CD4-positive, alpha-beta memory T cell (primary cell): ENCODE measurements at regions of chr16 and their contacts with region 1.

Region 1: GRCh38 chr16:84738255-84739038 is 38.6 kb downstream of the USP10 start:
- DNase-seq: peak; percentile 75 to 82 (median 78)
- H3K4me3 ChIP-seq: no peak overlapping the region
- H3K4me3 Mint-ChIP-seq: peak overlapping the region; percentile 27 to 80 (median 64)
- H3K27ac ChIP-seq: no peak overlapping the region
- H3K27ac Mint-ChIP-seq: peak overlapping the region; percentile 2 to 87 (median 80)
- H3K4me1 ChIP-seq: peaks cover 33% of the 10 kb centered on the region
- H3K4me1 Mint-ChIP-seq: peaks cover 36 to 53% (median 43%) of the 10 kb centered on the region in 4 donors
- H3K27me3 ChIP-seq: no peaks in the 10 kb centered on the region
- H3K27me3 Mint-ChIP-seq: no peaks in the 10 kb centered on the region

Region 2: DNA sequence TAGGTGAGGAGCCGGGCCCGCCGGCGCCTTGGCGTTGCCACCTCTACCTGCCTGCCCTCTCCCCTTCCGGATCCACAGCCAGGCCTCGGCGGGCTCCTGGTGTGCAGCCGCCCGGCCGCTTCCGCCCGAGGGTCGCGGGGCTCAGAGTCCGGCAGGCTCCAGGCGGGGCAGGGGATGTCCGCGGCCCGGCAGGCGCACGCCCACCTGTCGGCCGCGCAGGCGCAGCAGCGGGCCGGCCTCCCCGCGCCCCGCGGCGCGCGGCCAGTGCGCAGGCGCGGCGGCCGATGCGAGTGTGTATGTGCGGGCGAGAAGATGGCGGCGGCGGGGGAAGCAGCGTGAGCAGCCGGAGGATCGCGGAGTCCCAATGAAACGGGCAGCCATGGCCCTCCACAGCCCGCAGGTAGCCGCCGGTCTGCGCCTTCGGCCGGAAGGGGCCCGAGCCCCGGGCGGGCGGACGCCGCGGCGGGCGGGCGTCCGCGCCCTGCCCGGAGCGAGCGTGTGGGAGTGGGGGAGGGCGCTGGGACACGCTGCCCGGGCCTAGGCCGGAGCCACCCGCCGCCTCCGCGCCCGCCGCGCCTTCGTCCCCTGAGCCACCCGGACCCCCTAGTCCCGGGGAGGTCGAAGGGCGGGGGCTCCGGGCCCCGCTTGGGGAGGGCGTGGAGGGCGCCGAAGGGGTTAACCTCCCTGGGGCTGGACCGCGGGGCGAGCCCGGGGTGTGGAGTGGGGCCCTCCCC is 38.6 kb before region 1 on chr16 and contains the start of gene USP10:
- CTCF ChIA-PET with region 1: interaction called, 17 read pairs
- POLR2A ChIA-PET with region 1: interaction called, 3 read pairs
- intact Hi-C with region 1: loop called (anchors 5 kb)
- DNase-seq: peak; percentile 83 to 91 (median 88)
- H3K4me3 ChIP-seq: peak within 1 kb of the TSS; percentile 78 to 86
- H3K4me3 Mint-ChIP-seq: peak within 1 kb of the TSS; percentile 95 to 100 (median 98)
- H3K27ac ChIP-seq: peak within 1 kb of the TSS; percentile 92
- H3K27ac Mint-ChIP-seq: peak within 1 kb of the TSS; percentile 93 to 99 (median 98)
- H3K4me1 ChIP-seq: peaks cover 47% of the 10 kb centered on the region
- H3K4me1 Mint-ChIP-seq: peaks cover 23 to 46% (median 35%) of the 10 kb centered on the region in 4 donors
- H3K27me3 ChIP-seq: no peaks in the 10 kb centered on the region
- H3K27me3 Mint-ChIP-seq: no peaks in the 10 kb centered on the region
- total RNA-seq, gene USP10: 89.0 to 93.2 TPM

Region 3: GRCh38 chr16:84765616-84766580 is 27.5 kb after region 1 on chr16:
- CTCF ChIA-PET with region 1: interaction called, 10 read pairs
- POLR2A ChIA-PET with region 1: no interaction called
- intact Hi-C with region 1: no loop called
- DNase-seq: peak; percentile 36 to 65 (median 55)
- H3K4me3 ChIP-seq: no peak overlapping the region
- H3K4me3 Mint-ChIP-seq: peak overlapping the region; percentile 43 to 90 (median 80)
- H3K27ac ChIP-seq: peak overlapping the region; percentile 44
- H3K27ac Mint-ChIP-seq: peak overlapping the region; percentile 85 to 98 (median 95)
- H3K4me1 ChIP-seq: peaks cover 51% of the 10 kb centered on the region
- H3K4me1 Mint-ChIP-seq: peaks cover 46 to 71% (median 58%) of the 10 kb centered on the region in 4 donors
- H3K27me3 ChIP-seq: no peaks in the 10 kb centered on the region
- H3K27me3 Mint-ChIP-seq: no peaks in the 10 kb centered on the region

Region 4: DNA sequence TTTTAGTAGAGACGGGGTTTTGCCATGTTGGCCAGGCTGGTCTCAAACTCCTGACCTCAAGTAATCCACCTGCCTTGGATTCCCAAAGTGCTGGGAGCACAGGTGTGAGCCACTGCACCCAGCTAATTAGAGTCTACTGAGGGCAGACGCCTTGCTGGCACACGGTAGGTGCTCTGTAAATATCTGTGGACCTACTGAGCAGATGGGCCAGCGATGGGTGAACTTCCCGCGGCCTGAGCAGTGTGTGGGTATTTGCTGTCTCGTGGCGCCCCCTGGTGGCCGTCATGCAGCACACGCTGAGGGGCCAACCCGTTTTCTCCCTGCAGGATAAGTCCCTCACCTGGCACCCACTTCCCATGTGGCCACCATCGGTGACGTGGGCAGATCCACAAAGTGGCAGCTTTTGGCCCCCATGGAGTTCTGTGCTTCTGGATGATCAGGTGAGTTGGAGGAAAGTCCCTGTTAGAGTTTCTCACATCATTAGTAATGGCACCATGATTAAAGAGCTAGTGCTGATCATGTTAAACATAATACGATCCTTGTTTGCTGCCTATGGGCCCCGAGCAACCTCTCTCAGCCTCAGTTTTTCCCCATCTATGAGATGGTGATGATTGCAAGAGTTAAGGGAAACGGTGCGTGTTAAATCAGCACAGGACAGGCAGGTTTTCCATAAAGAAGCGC is 232.1 kb after region 1 on chr16:
- CTCF ChIA-PET with region 1: interaction called, 74 read pairs
- POLR2A ChIA-PET with region 1: interaction called, 3 read pairs
- intact Hi-C with region 1: loop called (anchors 1 kb)
- DNase-seq: peak; percentile 72 to 81 (median 75)
- H3K4me3 ChIP-seq: no peak overlapping the region
- H3K4me3 Mint-ChIP-seq: peak overlapping the region in 3 of 8 donors; percentile 1 to 41 (median 15)
- H3K27ac ChIP-seq: no peak overlapping the region
- H3K27ac Mint-ChIP-seq: peak overlapping the region in 6 of 7 donors; percentile 22 to 74 (median 64)
- H3K4me1 ChIP-seq: peaks cover 7% of the 10 kb centered on the region
- H3K4me1 Mint-ChIP-seq: peaks cover 4 to 6% (median 5%) of the 10 kb centered on the region in 4 donors
- H3K27me3 ChIP-seq: no peaks in the 10 kb centered on the region
- H3K27me3 Mint-ChIP-seq: no peaks in the 10 kb centered on the region

Region 5: GRCh38 chr16:85046931-85047866 is 308.8 kb after region 1 on chr16:
- CTCF ChIA-PET with region 1: no interaction called
- POLR2A ChIA-PET with region 1: no interaction called
- intact Hi-C with region 1: no loop called
- DNase-seq: no peak
- H3K4me3 ChIP-seq: no peak overlapping the region
- H3K4me3 Mint-ChIP-seq: peak overlapping the region in 4 of 8 donors; percentile 8 to 30 (median 10)
- H3K27ac ChIP-seq: no peak overlapping the region
- H3K27ac Mint-ChIP-seq: peak overlapping the region in 5 of 7 donors; percentile 4 to 79 (median 46)
- H3K4me1 ChIP-seq: peaks cover 5% of the 10 kb centered on the region
- H3K4me1 Mint-ChIP-seq: peaks cover 3 to 25% (median 6%) of the 10 kb centered on the region in 4 donors
- H3K27me3 ChIP-seq: no peaks in the 10 kb centered on the region
- H3K27me3 Mint-ChIP-seq: no peaks in the 10 kb centered on the region